A549 (cell line): ENCODE measurements at regions of chr17 and their contacts with region 1.

Region 1: GRCh38 chr17:79892459-79892858 is 53.2 kb upstream of the CBX4 start:
- DNase-seq: no peak
- ATAC-seq: no peak; a peak in 3 of 6 replicates
- H3K4me3 ChIP-seq: no peak overlapping the region
- H3K27ac ChIP-seq: no peak overlapping the region
- H3K4me1 ChIP-seq: no peaks in the 10 kb centered on the region
- CTCF ChIP-seq: no peak
- EP300 ChIP-seq: no peak
- POLR2A ChIP-seq: no peak
- RAD21 ChIP-seq: no peak

Region 2: GRCh38 chr17:79750662-79751545 is 141.6 kb before region 1 on chr17:
- CTCF ChIA-PET with region 1: no interaction called
- POLR2A ChIA-PET with region 1: no interaction called
- DNase-seq: peak in 1 of 2 experiments; percentile 37
- ATAC-seq: no peak
- H3K4me3 ChIP-seq: no peak overlapping the region
- H3K27ac ChIP-seq: 0 out of 6 replicates have a peak overlapping the region, but pooled peaks of 1 of the 2 experiments have one; percentile 5
- H3K4me1 ChIP-seq: peaks cover 34% of the 10 kb centered on the region
- CTCF ChIP-seq: no peak
- EP300 ChIP-seq: no peak
- POLR2A ChIP-seq: no peak
- RAD21 ChIP-seq: no peak

Region 3: GRCh38 chr17:79826841-79827578 is 65.4 kb before region 1 on chr17:
- CTCF ChIA-PET with region 1: no interaction called
- POLR2A ChIA-PET with region 1: no interaction called
- DNase-seq: no peak
- ATAC-seq: no peak
- H3K4me3 ChIP-seq: no peak overlapping the region
- H3K27ac ChIP-seq: no peak overlapping the region
- H3K4me1 ChIP-seq: peaks cover 34% of the 10 kb centered on the region
- CTCF ChIP-seq: no peak
- EP300 ChIP-seq: no peak
- POLR2A ChIP-seq: no peak; the same call in none of the 2 replicates
- RAD21 ChIP-seq: no peak

Region 4: GRCh38 chr17:79874329-79874981 is 18.0 kb before region 1 on chr17:
- CTCF ChIA-PET with region 1: interaction called, 43 read pairs
- POLR2A ChIA-PET with region 1: no interaction called
- DNase-seq: peak; percentile 72 to 95
- ATAC-seq: peak; percentile 81 to 91
- H3K4me3 ChIP-seq: no peak overlapping the region
- H3K27ac ChIP-seq: no peak overlapping the region
- H3K4me1 ChIP-seq: no peaks in the 10 kb centered on the region
- CTCF ChIP-seq: peak; percentile 55
- EP300 ChIP-seq: no peak
- POLR2A ChIP-seq: no peak
- RAD21 ChIP-seq: peak in 1 of 2 experiments; percentile 19; a peak in 1 of 5 replicates

Region 5: GRCh38 chr17:79905832-79906231 is 13.4 kb after region 1 on chr17:
- CTCF ChIA-PET with region 1: interaction called, 10 read pairs
- POLR2A ChIA-PET with region 1: no interaction called
- DNase-seq: peak; percentile 75 to 77
- ATAC-seq: peak; percentile 89 to 92
- H3K4me3 ChIP-seq: no peak overlapping the region
- H3K27ac ChIP-seq: no peak overlapping the region; a peak in 1 of 6 replicates
- H3K4me1 ChIP-seq: peaks cover 19% of the 10 kb centered on the region
- CTCF ChIP-seq: peak; percentile 35; the same call in 2 of the 3 replicates
- EP300 ChIP-seq: no peak
- POLR2A ChIP-seq: no peak
- RAD21 ChIP-seq: no peak; a peak in 1 of 5 replicates

Region 6: DNA sequence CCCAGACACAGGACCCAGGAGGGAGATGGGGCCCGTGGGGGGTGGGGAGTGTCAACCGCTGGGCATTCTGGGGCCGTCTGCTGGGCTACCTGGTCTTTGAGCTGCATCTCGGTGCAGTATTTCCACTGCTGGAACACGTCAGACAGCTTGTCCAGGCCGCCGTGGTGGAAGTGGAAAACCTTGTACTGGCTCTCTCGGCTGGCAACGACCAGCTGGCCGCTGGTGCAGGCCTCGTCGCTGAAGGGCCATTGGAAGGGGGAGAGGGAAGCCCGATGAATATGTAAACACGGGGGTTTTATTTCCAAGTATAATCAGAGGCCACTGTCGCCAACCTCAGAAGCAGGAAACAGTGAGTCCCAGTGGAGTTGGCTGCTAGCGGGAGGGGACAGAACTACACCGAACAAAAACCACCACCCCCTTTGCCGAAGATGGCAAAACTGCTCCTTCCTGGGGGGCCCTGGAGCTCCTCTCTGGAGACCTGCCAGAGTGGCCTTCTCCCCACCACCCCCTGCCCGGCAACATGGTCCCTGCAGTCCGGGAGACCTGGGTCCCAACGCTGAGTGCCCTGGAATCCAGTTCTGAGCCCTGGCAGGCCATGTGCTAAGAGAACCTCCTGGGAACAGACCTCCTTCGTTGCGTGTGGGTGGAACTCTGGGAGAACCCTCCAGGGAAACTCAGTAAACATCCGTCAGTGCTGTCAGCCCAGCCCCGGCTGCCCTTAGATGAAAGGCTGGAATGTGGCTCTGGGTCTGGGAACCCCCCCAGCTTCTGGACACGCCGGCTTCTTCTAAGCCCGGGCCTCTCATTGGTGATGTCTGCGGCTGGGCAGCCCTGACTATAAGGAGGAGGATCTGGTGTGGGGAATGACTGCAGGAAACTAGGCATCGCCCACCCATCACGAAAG is 59.2 kb after region 1 on chr17:
- CTCF ChIA-PET with region 1: no interaction called
- POLR2A ChIA-PET with region 1: no interaction called
- DNase-seq: no peak
- ATAC-seq: no peak
- H3K4me3 ChIP-seq: no peak overlapping the region
- H3K27ac ChIP-seq: no peak overlapping the region
- H3K4me1 ChIP-seq: no peaks in the 10 kb centered on the region
- CTCF ChIP-seq: no peak
- EP300 ChIP-seq: no peak
- POLR2A ChIP-seq: no peak
- RAD21 ChIP-seq: no peak